T-cell (primary cell): ENCODE measurements at regions of chr11 and their contacts with region 1.

Region 1: GRCh38 chr11:67468835-67469811 is at the start of gene TMEM134:
- DNase-seq: peak; percentile 81 to 95 (median 88)
- ATAC-seq: peak; percentile 73 to 79 (median 78)
- H3K4me3 ChIP-seq: peak within 1 kb of the TSS; percentile 80 to 84
- H3K4me3 Mint-ChIP-seq: peak within 1 kb of the TSS; percentile 83 to 88 (median 87)
- H3K27ac ChIP-seq: peak within 1 kb of the TSS; percentile 67
- H3K27ac Mint-ChIP-seq: peak within 1 kb of the TSS; percentile 89 to 93
- H3K4me1 ChIP-seq: peaks cover 11 to 53% of the 10 kb centered on the region in 2 experiments
- H3K4me1 Mint-ChIP-seq: peaks cover 32 to 43% (median 35%) of the 10 kb centered on the region in 3 donors
- H3K27me3 ChIP-seq: no peaks in the 10 kb centered on the region
- H3K27me3 Mint-ChIP-seq: no peaks in the 10 kb centered on the region
- total RNA-seq, gene TMEM134: 59.9 to 113 (median 106) TPM

Region 2: DNA sequence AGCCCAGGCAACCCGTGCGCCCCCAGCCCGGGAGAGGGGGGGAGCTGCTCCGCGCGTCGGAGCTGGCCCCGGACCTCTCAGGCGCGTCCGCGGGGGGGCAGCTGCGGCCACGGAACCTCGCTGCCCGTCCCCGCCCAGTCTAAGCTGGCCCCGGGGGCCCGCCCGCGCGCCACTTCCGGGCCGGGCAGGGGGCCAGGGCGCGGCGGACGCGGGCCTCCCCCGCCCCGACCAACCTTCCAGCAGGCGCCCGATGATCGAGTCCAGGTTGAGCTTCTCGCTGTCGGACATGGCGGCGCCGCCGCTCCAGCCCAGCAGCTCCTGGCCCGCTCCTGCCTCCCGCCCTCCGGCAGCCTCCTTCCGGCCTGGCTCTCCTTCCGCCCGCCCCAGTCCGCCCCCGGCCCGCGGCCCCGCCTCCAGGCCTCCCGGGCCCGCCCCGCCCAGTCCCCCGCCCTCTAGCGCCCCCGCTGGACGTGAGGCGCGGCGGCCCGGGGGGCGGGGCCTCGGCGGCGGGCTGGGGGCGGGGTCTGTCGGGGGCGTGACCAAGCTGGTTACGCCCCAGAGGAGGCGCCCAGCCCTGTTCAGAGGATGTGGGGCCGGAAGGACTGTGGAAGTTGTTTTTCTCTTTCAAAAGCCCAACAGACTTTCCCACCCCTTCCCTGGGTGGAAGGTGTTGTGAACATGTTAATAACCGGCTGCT is 67.5 kb before region 1 on chr11 and contains the start of gene PPP1CA:
- CTCF ChIA-PET with region 1: interaction called in 1 of 2 experiments, 10 read pairs
- POLR2A ChIA-PET with region 1: interaction called in 1 of 2 experiments, 6 read pairs
- DNase-seq: peak; percentile 78 to 96 (median 90)
- ATAC-seq: peak; percentile 67 to 75 (median 72)
- H3K4me3 ChIP-seq: peak within 1 kb of the TSS; percentile 81 to 97
- H3K4me3 Mint-ChIP-seq: peak within 1 kb of the TSS; percentile 88 to 97 (median 96)
- H3K27ac ChIP-seq: peak within 1 kb of the TSS; percentile 74
- H3K27ac Mint-ChIP-seq: peak within 1 kb of the TSS; percentile 96
- H3K4me1 ChIP-seq: peaks cover 30 to 88% of the 10 kb centered on the region in 2 experiments
- H3K4me1 Mint-ChIP-seq: peaks cover 63 to 76% (median 66%) of the 10 kb centered on the region in 3 donors
- H3K27me3 ChIP-seq: no peaks in the 10 kb centered on the region
- H3K27me3 Mint-ChIP-seq: no peaks in the 10 kb centered on the region
- total RNA-seq, gene PPP1CA: 118 to 198 (median 186) TPM

Region 3: GRCh38 chr11:67452141-67452952 is 16.8 kb before region 1 on chr11 and contains the start of gene GPR152:
- CTCF ChIA-PET with region 1: no interaction called
- POLR2A ChIA-PET with region 1: no interaction called
- DNase-seq: no peak
- ATAC-seq: no peak
- H3K4me3 ChIP-seq: no peak within 1 kb of the TSS
- H3K4me3 Mint-ChIP-seq: no peak within 1 kb of the TSS
- H3K27ac ChIP-seq: no peak within 1 kb of the TSS
- H3K27ac Mint-ChIP-seq: peak within 1 kb of the TSS in 1 of 2 donors; percentile 52
- H3K4me1 ChIP-seq: peaks cover 11 to 50% of the 10 kb centered on the region in 2 experiments
- H3K4me1 Mint-ChIP-seq: peaks cover 29 to 31% (median 29%) of the 10 kb centered on the region in 3 donors
- H3K27me3 ChIP-seq: peaks cover 0 to 24% of the 10 kb centered on the region in 2 experiments
- H3K27me3 Mint-ChIP-seq: no peaks in the 10 kb centered on the region
- total RNA-seq, gene GPR152: 0.19 TPM in 1 of 5 donors, not detected in the others